Esophagus muscularis mucosa (tissue), 4 donors: ENCODE measurements at regions of chr19 and their contacts with region 1.

Region 1: GRCh38 chr19:34501339-34502320 is 20.1 kb downstream of the WTIP start:
- DNase-seq: peak; percentile 97
- H3K4me3 ChIP-seq: peak overlapping the region in 1 of 4 donors; percentile 16
- H3K27ac ChIP-seq: peak overlapping the region in 3 of 4 donors; percentile 2 to 47 (median 40)
- H3K4me1 ChIP-seq: peaks cover 18 to 27% (median 23%) of the 10 kb centered on the region in 4 donors
- H3K27me3 ChIP-seq: no peaks in the 10 kb centered on the region
- CTCF ChIP-seq: peak; percentile 94 to 99 (median 98)
- EP300 ChIP-seq: no peak
- POLR2A ChIP-seq: no peak

Region 2: GRCh38 chr19:34430738-34431625 is 70.6 kb before region 1 on chr19:
- intact Hi-C with region 1: loop called (anchors 5 kb)
- DNase-seq: no peak
- H3K4me3 ChIP-seq: peak overlapping the region in 2 of 4 donors; percentile 76 to 91
- H3K27ac ChIP-seq: peak overlapping the region; percentile 10 to 91 (median 28)
- H3K4me1 ChIP-seq: peaks cover 32 to 61% (median 51%) of the 10 kb centered on the region in 4 donors
- H3K27me3 ChIP-seq: no peaks in the 10 kb centered on the region
- CTCF ChIP-seq: peak; percentile 41 to 62 (median 55)
- EP300 ChIP-seq: no peak
- POLR2A ChIP-seq: no peak

Region 3: GRCh38 chr19:34712395-34713261 is 211.0 kb after region 1 on chr19:
- intact Hi-C with region 1: loop called (anchors 5 kb)
- DNase-seq: no peak
- H3K4me3 ChIP-seq: no peak overlapping the region
- H3K27ac ChIP-seq: no peak overlapping the region
- H3K4me1 ChIP-seq: peaks cover 0 to 6% (median 0%) of the 10 kb centered on the region in 4 donors
- H3K27me3 ChIP-seq: peaks cover 0 to 5% (median 0%) of the 10 kb centered on the region in 4 donors
- CTCF ChIP-seq: peak; percentile 78 to 87 (median 83)
- EP300 ChIP-seq: no peak
- POLR2A ChIP-seq: no peak